ENCODE measurements at regions of chr15 and their contacts with region 1.

Region 1: GRCh38 chr15:29390051-29390450 is 120.4 kb upstream of the NSMCE3 start:
- DNase-seq: no peak
- ATAC-seq: no peak
- H3K4me3 ChIP-seq: no peak overlapping the region
- H3K4me3 Mint-ChIP-seq: no peak overlapping the region
- H3K27ac ChIP-seq: no peak overlapping the region
- H3K27ac Mint-ChIP-seq: no peak overlapping the region
- H3K4me1 ChIP-seq: no peaks in the 10 kb centered on the region
- H3K4me1 Mint-ChIP-seq: no peaks in the 10 kb centered on the region
- H3K27me3 ChIP-seq: peaks cover 0 to 9% of the 10 kb centered on the region in 2 experiments
- H3K27me3 Mint-ChIP-seq: peaks cover under 1 to 13% of the 10 kb centered on the region in 2 donors

Region 2: GRCh38 chr15:29121907-29122306 is 268.1 kb before region 1 on chr15:
- CTCF ChIA-PET with region 1: interaction called in 1 of 2 experiments, 10 read pairs
- POLR2A ChIA-PET with region 1: no interaction called
- DNase-seq: no peak
- ATAC-seq: no peak
- H3K4me3 ChIP-seq: no peak overlapping the region
- H3K4me3 Mint-ChIP-seq: no peak overlapping the region
- H3K27ac ChIP-seq: no peak overlapping the region
- H3K27ac Mint-ChIP-seq: no peak overlapping the region
- H3K4me1 ChIP-seq: no peaks in the 10 kb centered on the region
- H3K4me1 Mint-ChIP-seq: no peaks in the 10 kb centered on the region
- H3K27me3 ChIP-seq: peaks cover 0 to 10% of the 10 kb centered on the region in 2 experiments
- H3K27me3 Mint-ChIP-seq: no peaks in the 10 kb centered on the region

Measured in T-cell (primary cell).